ENCODE measurements at regions of chr10 and their contacts with region 1.

Region 1: DNA sequence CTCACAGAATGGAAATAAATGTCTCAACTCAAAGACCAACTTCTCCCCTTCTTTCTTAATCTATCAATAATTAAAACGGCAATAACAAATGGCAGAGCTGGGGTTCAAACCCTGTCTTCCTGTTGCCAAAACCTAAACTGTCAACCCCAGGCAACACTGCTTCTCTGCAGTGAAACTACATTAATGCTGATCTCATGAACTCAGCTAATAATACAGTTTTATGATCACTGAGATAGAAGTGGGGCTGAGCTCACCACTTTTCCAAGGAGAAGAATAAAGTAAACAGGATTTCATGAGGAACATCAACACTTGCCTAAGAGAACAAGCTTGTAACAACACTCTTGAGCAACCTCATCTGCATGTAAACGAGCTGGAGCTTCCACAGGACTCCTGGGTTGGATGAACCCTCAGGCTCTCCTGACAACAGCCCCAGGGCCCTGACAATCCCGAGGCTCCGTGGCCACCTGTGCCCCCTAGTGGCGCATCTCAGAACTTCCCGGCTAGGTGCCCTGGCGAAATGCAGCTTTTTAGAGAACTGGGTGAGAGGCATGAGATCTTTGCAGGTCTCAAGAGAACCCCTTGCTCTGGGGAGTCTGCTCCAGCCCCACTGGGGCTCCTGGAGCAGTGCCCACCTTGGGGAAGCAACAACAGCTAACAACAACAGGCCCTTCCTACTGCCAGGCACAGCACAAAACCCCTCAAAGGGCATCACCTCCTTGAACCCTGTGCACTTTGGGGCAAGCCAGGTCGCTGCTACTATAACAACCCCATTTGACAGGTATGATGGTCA is 169.3 kb downstream of the SH3PXD2A start:
- DNase-seq: peak; percentile 54 to 77 (median 65)
- H3K4me3 ChIP-seq: no peak overlapping the region
- H3K4me3 Mint-ChIP-seq: no peak overlapping the region
- H3K27ac ChIP-seq: no peak overlapping the region
- H3K27ac Mint-ChIP-seq: no peak overlapping the region
- H3K4me1 ChIP-seq: no peaks in the 10 kb centered on the region
- H3K4me1 Mint-ChIP-seq: no peaks in the 10 kb centered on the region
- H3K27me3 ChIP-seq: peaks cover 3 to 5% of the 10 kb centered on the region in 2 donors
- H3K27me3 Mint-ChIP-seq: peaks cover 15 to 23% (median 21%) of the 10 kb centered on the region in 3 donors
- CTCF ChIP-seq: peak; percentile 94

Region 2: GRCh38 chr10:103554488-103555324 is 131.4 kb before region 1 on chr10:
- intact Hi-C with region 1: no loop called
- DNase-seq: peak; percentile 74 to 83 (median 81)
- H3K4me3 ChIP-seq: peak overlapping the region; percentile 28 to 71 (median 50)
- H3K4me3 Mint-ChIP-seq: peak overlapping the region; percentile 75 to 83
- H3K27ac ChIP-seq: peak overlapping the region in 1 of 2 donors; percentile 70
- H3K27ac Mint-ChIP-seq: peak overlapping the region in 6 of 7 donors; percentile 4 to 82 (median 38)
- H3K4me1 ChIP-seq: peaks cover 66 to 79% of the 10 kb centered on the region in 2 donors
- H3K4me1 Mint-ChIP-seq: peaks cover 77% of the 10 kb centered on the region
- H3K27me3 ChIP-seq: peaks cover 0 to 17% of the 10 kb centered on the region in 2 donors
- H3K27me3 Mint-ChIP-seq: peaks cover 17 to 46% (median 41%) of the 10 kb centered on the region in 3 donors
- CTCF ChIP-seq: no peak

Region 3: GRCh38 chr10:103605359-103606095 is 80.5 kb before region 1 on chr10:
- intact Hi-C with region 1: loop called (anchors 1 to 2 kb)
- DNase-seq: peak; percentile 22 to 44 (median 38)
- H3K4me3 ChIP-seq: no peak overlapping the region
- H3K4me3 Mint-ChIP-seq: no peak overlapping the region
- H3K27ac ChIP-seq: no peak overlapping the region
- H3K27ac Mint-ChIP-seq: no peak overlapping the region
- H3K4me1 ChIP-seq: no peaks in the 10 kb centered on the region
- H3K4me1 Mint-ChIP-seq: no peaks in the 10 kb centered on the region
- H3K27me3 ChIP-seq: no peaks in the 10 kb centered on the region
- H3K27me3 Mint-ChIP-seq: no peaks in the 10 kb centered on the region
- CTCF ChIP-seq: peak; percentile 79

Region 4: GRCh38 chr10:103816431-103816830 is 130.4 kb after region 1 on chr10:
- intact Hi-C with region 1: no loop called
- DNase-seq: no peak
- H3K4me3 ChIP-seq: no peak overlapping the region
- H3K4me3 Mint-ChIP-seq: no peak overlapping the region
- H3K27ac ChIP-seq: no peak overlapping the region
- H3K27ac Mint-ChIP-seq: no peak overlapping the region
- H3K4me1 ChIP-seq: no peaks in the 10 kb centered on the region
- H3K4me1 Mint-ChIP-seq: no peaks in the 10 kb centered on the region
- H3K27me3 ChIP-seq: peaks cover 0 to 6% of the 10 kb centered on the region in 2 donors
- H3K27me3 Mint-ChIP-seq: peaks cover 11 to 19% (median 12%) of the 10 kb centered on the region in 3 donors
- CTCF ChIP-seq: no peak

Measured in CD14-positive monocyte (primary cell).